Ascending aorta (tissue), 2 donors: ENCODE measurements at regions of chr5 and their contacts with region 1.

Region 1: GRCh38 chr5:16544607-16545374 is 72.0 kb downstream of the RETREG1 start:
- DNase-seq: no peak
- H3K4me3 ChIP-seq: no peak overlapping the region
- H3K27ac ChIP-seq: no peak overlapping the region
- H3K4me1 ChIP-seq: no peaks in the 10 kb centered on the region
- H3K27me3 ChIP-seq: no peaks in the 10 kb centered on the region
- CTCF ChIP-seq: no peak

Region 2: DNA sequence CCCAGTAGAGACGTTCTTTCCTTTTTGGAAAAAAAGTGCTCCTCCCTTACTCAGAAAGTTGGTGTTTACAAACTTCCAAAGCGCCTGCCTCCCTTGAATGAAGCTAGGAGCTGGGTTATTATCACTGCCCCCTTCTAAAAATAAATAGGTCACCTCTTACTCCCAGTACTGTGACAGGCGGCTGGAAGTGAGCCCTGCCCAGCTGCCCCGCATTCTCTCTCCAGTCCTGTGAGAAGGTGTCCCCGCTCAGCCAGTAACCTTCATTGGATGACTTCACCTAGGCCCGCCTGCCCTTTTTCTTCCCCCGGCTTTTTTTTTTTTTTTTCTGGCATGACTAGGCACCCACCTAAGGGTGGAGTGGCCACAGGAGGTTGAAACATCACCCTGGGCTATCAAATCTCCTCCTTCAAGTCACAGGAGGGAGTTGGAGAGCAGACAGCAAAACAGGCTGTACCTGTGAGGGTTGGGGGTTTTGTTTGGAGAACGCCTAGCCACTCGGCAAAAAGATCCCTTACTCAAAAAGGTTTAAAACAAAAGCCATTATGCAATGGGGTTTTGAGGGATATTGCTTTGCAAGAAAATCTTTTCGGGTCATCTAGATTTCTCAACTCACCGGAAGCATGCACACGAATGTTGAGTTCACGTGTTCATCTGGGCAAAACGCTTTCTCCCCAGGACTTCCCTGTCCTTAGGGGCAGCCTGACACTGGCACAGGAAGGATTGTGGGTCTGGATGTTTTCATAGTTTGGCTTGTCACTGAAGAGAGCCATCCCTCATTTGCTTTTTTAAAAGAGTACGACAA is 35.9 kb before region 1 on chr5:
- intact Hi-C with region 1: loop called (anchors 5 kb)
- DNase-seq: no peak
- H3K4me3 ChIP-seq: peak overlapping the region; percentile 23 to 39
- H3K27ac ChIP-seq: peak overlapping the region; percentile 35 to 65
- H3K4me1 ChIP-seq: peaks cover 0 to 3% of the 10 kb centered on the region in 2 donors
- H3K27me3 ChIP-seq: no peaks in the 10 kb centered on the region
- CTCF ChIP-seq: no peak